ENCODE measurements at regions of chr19 and their contacts with region 1.

Region 1: DNA sequence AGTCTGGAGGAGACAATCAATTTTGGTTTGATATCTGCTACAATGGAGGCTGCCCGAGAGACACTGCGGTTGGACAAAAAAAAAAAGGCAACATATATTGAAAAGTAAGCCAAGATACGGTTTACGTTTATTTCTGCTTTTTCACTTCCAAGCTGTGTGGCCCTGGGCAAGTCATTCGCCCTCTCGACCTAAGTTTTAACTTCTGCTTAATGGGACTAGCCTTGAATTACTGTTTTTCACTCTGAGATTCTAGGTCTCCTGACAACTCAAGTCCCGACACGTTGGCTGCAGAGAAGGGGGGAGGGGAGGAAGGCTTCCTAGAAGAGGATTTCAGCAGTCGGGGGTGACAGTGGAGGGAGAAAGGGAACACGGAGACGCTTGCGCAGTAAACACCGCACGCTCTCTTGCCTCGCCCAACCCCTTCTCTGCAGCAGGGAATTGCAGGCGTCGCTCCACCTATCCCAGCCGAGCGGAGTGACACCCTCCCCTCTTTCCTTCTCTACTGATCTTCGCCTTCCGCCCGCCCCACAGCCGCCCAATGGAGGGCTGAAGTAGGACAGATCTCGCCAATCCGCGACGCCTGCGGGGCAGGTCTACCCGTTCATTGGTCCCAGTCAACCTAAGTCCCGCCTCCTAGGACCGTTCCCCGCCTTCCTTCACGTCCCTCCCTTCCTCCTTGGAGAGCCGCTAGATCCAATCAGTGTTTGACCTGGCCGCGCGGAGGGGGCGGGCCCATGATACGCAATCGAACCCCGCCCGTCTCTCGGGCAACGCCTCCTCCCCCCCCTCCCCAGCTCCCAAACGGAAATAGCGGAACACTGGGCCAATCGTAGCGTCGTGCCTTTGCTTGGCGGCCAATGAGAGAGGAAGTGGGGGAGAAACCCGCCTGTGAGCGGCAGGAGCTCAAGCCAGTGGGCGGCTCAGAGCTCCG is 529 bp upstream of the AP2A1 start:
- DNase-seq: peak; percentile 98 to 100
- ATAC-seq: peak; percentile 90 to 96 (median 94)
- H3K4me3 ChIP-seq: peak overlapping the region; percentile 4 to 96 (median 82)
- H3K27ac ChIP-seq: peak overlapping the region; percentile 81 to 97 (median 92)
- H3K4me1 ChIP-seq: peaks cover 4 to 49% (median 33%) of the 10 kb centered on the region in 9 donors
- H3K27me3 ChIP-seq: no peaks in the 10 kb centered on the region
- CTCF ChIP-seq: no peak

Region 2: GRCh38 chr19:49718511-49718910 is 47.8 kb before region 1 on chr19:
- intact Hi-C with region 1: loop called in 1 of 10 experiments (anchors 5 kb)
- DNase-seq: no peak
- ATAC-seq: no peak
- H3K4me3 ChIP-seq: no peak overlapping the region
- H3K27ac ChIP-seq: peak overlapping the region in 1 of 10 donors; percentile 80
- H3K4me1 ChIP-seq: peaks cover 0 to 14% (median 5%) of the 10 kb centered on the region in 9 donors
- H3K27me3 ChIP-seq: no peaks in the 10 kb centered on the region
- CTCF ChIP-seq: no peak

Region 3: GRCh38 chr19:49808711-49809159 is 42.5 kb after region 1 on chr19:
- intact Hi-C with region 1: loop called in 5 of 10 experiments (anchors 5 kb)
- DNase-seq: peak; percentile 95 to 96
- ATAC-seq: peak; percentile 75 to 83 (median 78)
- H3K4me3 ChIP-seq: peak overlapping the region; percentile 56 to 87 (median 82)
- H3K27ac ChIP-seq: peak overlapping the region; percentile 72 to 89 (median 84)
- H3K4me1 ChIP-seq: peaks cover 8 to 36% (median 23%) of the 10 kb centered on the region in 9 donors
- H3K27me3 ChIP-seq: no peaks in the 10 kb centered on the region
- CTCF ChIP-seq: no peak

Measured in heart right ventricle (tissue), 16 donors.